Activated CD8-positive, alpha-beta T cell treated with anti-CD3 and anti-CD28 coated beads for 36 hours (primary cell): ENCODE measurements at regions of chrX and their contacts with region 1.

Region 1: DNA sequence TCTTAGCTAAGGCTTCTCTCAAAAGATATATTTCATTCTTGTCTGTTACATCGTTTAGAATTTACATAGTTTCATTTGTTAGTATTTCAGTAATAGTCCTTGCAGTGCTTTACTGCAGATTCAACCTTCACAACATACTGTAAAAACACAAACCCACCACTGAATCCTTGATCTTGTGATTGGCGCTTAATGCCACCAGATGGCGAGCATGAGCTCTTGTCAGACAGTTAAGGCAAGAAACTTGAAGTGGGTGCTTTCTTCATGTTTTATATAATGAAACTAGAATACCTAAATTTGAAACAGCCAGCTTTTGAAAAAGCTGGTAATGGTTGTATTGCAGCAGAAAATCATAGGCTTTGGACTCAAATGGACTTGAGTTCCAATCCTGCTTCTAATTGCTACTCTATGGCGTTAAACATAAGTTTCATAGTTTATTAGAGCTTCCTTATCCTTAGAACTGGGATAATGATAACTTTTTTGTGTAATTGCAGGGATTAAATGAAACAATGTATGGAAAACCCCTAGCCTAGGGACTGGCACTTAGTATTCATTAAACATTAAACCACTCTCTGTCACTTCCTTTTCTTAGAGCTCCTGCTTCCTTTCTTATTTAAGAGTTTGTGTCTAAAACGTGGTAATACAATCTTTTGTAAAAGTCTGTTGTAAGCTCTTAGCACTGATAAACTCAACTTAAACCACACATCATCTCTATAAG is 95.1 kb downstream of the USP9X start:
- DNase-seq: peak; percentile 67
- ATAC-seq: peak; percentile 86
- H3K4me3 Mint-ChIP-seq: peak overlapping the region; percentile 17
- H3K27ac Mint-ChIP-seq: peak overlapping the region; percentile 89
- H3K4me1 Mint-ChIP-seq: peaks cover 47% of the 10 kb centered on the region
- H3K27me3 Mint-ChIP-seq: no peaks in the 10 kb centered on the region
- CTCF ChIP-seq: peak; percentile 58

Region 2: GRCh38 chrX:40755291-40756249 is 424.8 kb before region 1 on chrX:
- CTCF ChIA-PET with region 1: no interaction called
- POLR2A ChIA-PET with region 1: no interaction called
- intact Hi-C with region 1: no loop called
- DNase-seq: no peak
- ATAC-seq: no peak
- H3K4me3 Mint-ChIP-seq: no peak overlapping the region
- H3K27ac Mint-ChIP-seq: no peak overlapping the region
- H3K4me1 Mint-ChIP-seq: peaks cover 4% of the 10 kb centered on the region
- H3K27me3 Mint-ChIP-seq: no peaks in the 10 kb centered on the region
- CTCF ChIP-seq: no peak

Region 3: DNA sequence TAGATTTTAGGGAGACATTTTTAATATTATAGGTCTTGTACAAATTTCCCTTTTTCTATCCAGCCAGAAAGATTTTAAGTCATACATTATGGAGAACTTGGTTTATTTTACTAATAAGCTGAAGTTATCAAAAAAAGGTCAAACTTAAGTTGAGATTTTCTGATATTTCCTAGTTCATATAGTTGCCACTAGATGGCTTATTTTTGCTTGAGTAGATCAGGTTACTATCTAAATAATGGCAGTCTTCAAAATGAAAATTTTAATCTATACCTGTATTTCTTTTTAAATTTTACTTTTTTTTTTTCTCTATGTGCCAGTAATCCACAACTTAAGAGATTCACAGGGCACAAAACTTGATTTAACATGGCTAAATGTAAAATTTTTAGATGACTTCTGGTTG is 42.8 kb before region 1 on chrX:
- CTCF ChIA-PET with region 1: interaction called, 11 read pairs
- POLR2A ChIA-PET with region 1: no interaction called
- intact Hi-C with region 1: no loop called
- DNase-seq: no peak
- ATAC-seq: no peak
- H3K4me3 Mint-ChIP-seq: no peak overlapping the region
- H3K27ac Mint-ChIP-seq: no peak overlapping the region
- H3K4me1 Mint-ChIP-seq: peaks cover 12% of the 10 kb centered on the region
- H3K27me3 Mint-ChIP-seq: no peaks in the 10 kb centered on the region
- CTCF ChIP-seq: peak; percentile 40

Region 4: GRCh38 chrX:41164449-41164848 is 15.9 kb before region 1 on chrX:
- CTCF ChIA-PET with region 1: interaction called, 16 read pairs
- POLR2A ChIA-PET with region 1: interaction called, 7 read pairs
- intact Hi-C with region 1: no loop called
- DNase-seq: no peak
- ATAC-seq: no peak
- H3K4me3 Mint-ChIP-seq: no peak overlapping the region
- H3K27ac Mint-ChIP-seq: no peak overlapping the region
- H3K4me1 Mint-ChIP-seq: peaks cover 2% of the 10 kb centered on the region
- H3K27me3 Mint-ChIP-seq: no peaks in the 10 kb centered on the region
- CTCF ChIP-seq: no peak

Region 5: DNA sequence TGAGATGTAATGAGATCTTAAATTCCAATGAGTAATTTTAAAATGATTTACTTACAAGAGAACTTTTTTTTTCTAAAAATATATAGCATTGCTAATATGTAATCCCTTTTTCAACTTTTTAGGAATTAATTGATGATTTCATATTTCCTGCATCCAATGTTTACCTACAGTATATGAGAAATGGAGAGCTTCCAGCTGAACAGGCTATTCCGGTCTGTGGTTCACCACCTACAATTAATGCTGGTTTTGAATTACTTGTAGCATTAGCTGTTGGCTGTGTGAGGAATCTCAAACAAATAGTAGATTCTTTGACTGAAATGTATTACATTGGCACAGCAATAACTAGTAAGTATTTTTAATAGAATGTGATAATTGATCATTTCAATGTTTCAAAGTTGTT is 18.1 kb after region 1 on chrX:
- CTCF ChIA-PET with region 1: interaction called, 11 read pairs
- POLR2A ChIA-PET with region 1: interaction called, 3 read pairs
- intact Hi-C with region 1: no loop called
- DNase-seq: no peak
- ATAC-seq: no peak
- H3K4me3 Mint-ChIP-seq: no peak overlapping the region
- H3K27ac Mint-ChIP-seq: no peak overlapping the region
- H3K4me1 Mint-ChIP-seq: peaks cover 4% of the 10 kb centered on the region
- H3K27me3 Mint-ChIP-seq: no peaks in the 10 kb centered on the region
- CTCF ChIP-seq: no peak

Region 6: DNA sequence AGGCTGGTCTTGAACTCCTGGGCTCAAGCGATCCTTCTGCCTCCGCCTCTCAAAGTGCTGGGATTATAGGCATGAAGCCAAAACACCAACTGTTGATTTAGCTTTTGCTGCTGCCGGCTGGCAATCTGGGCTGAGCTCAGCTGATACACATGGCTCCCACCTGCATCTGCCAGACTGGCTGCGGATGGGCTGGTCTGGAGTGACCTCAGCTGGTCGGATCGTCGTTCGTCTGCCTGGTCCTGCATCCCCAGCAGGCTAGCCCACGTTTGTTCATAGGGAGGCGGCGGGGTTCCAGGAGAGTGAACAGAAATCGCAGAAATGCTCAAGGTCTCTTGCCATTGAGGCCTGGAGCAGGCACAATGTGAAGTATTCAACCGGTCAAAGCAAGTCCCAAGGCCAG is 79.2 kb after region 1 on chrX:
- CTCF ChIA-PET with region 1: interaction called, 7 read pairs
- POLR2A ChIA-PET with region 1: interaction called, 3 read pairs
- intact Hi-C with region 1: loop called (anchors 10 kb)
- DNase-seq: no peak
- ATAC-seq: no peak
- H3K4me3 Mint-ChIP-seq: no peak overlapping the region
- H3K27ac Mint-ChIP-seq: no peak overlapping the region
- H3K4me1 Mint-ChIP-seq: no peaks in the 10 kb centered on the region
- H3K27me3 Mint-ChIP-seq: no peaks in the 10 kb centered on the region
- CTCF ChIP-seq: no peak